GM12878 (cell line): ENCODE measurements at regions of chr6 and their contacts with region 1.

Region 1: DNA sequence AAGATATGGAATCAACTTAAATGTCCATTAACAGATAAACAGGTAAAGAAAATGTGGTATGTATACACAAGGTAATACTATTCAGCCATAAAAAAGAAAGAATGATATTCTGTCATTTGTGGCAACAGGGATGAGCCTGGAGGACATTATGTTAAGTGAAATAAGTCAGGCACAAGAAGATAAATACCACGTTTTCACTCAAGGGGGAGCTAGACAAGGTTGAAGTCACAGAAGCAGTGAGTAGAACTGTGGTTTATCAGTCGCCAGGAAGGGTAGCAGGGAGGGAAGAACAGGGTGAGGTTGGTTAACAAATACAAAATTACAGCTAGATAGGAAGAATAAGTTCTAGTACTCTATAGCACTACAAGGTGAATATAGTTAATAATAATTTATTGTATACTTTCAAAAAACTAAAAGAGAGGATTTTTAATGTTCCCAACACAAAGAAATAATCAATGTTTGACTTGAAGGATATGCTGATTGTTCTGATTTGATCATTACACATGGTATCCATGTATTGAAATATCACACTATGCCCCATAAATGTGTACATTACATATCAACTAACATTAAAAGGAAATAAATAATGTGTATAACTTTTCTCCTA is 21.1 kb downstream of the RTN4IP1 start:
- DNase-seq: peak; percentile 40
- ATAC-seq: peak; percentile 95
- H3K4me3 ChIP-seq: no peak overlapping the region
- H3K27ac ChIP-seq: no peak overlapping the region
- H3K4me1 ChIP-seq: no peaks in the 10 kb centered on the region; the same call in 1 of the 2 replicates
- H3K27me3 ChIP-seq: no peaks in the 10 kb centered on the region
- CTCF ChIP-seq: peak; percentile 68 to 72 (median 68)
- EP300 ChIP-seq: no peak
- POLR2A ChIP-seq: no peak
- RAD21 ChIP-seq: peak; percentile 76

Region 2: GRCh38 chr6:106620931-106621672 is 12.9 kb after region 1 on chr6:
- CTCF ChIA-PET with region 1: interaction called, 19 read pairs
- POLR2A ChIA-PET with region 1: no interaction called
- RAD21 ChIA-PET with region 1: interaction called, 8 read pairs
- SMC1A ChIA-PET with region 1: interaction called, 8 read pairs
- in situ Hi-C with region 1: no loop called
- intact Hi-C with region 1: no loop called
- DNase-seq: no peak
- ATAC-seq: no peak
- H3K4me3 ChIP-seq: no peak overlapping the region
- H3K27ac ChIP-seq: no peak overlapping the region
- H3K4me1 ChIP-seq: peaks cover 7% of the 10 kb centered on the region; the same call in 1 of the 2 replicates
- H3K27me3 ChIP-seq: no peaks in the 10 kb centered on the region
- CTCF ChIP-seq: no peak
- EP300 ChIP-seq: no peak
- POLR2A ChIP-seq: no peak
- RAD21 ChIP-seq: no peak

Region 3: GRCh38 chr6:106637717-106638341 is 29.7 kb after region 1 on chr6:
- CTCF ChIA-PET with region 1: interaction called, 19 read pairs
- POLR2A ChIA-PET with region 1: no interaction called
- RAD21 ChIA-PET with region 1: interaction called, 8 read pairs
- SMC1A ChIA-PET with region 1: interaction called, 18 read pairs
- in situ Hi-C with region 1: no loop called
- intact Hi-C with region 1: no loop called
- DNase-seq: no peak
- ATAC-seq: peak; percentile 87
- H3K4me3 ChIP-seq: peak overlapping the region; percentile 54
- H3K27ac ChIP-seq: peak overlapping the region; percentile 87
- H3K4me1 ChIP-seq: peaks cover 49% of the 10 kb centered on the region
- H3K27me3 ChIP-seq: no peaks in the 10 kb centered on the region
- CTCF ChIP-seq: no peak
- EP300 ChIP-seq: peak; percentile 33 to 73; a peak in 2 of 4 replicates
- POLR2A ChIP-seq: no peak
- RAD21 ChIP-seq: no peak

Region 4: GRCh38 chr6:106702451-106703110 is 94.4 kb after region 1 on chr6:
- CTCF ChIA-PET with region 1: interaction called, 13 read pairs
- POLR2A ChIA-PET with region 1: no interaction called
- RAD21 ChIA-PET with region 1: interaction called, 5 read pairs
- SMC1A ChIA-PET with region 1: interaction called, 5 read pairs
- in situ Hi-C with region 1: no loop called
- intact Hi-C with region 1: no loop called
- DNase-seq: peak; percentile 86
- ATAC-seq: peak; percentile 99
- H3K4me3 ChIP-seq: peak overlapping the region; percentile 23; the same call in 1 of the 2 replicates
- H3K27ac ChIP-seq: peak overlapping the region; percentile 93
- H3K4me1 ChIP-seq: peaks cover 17% of the 10 kb centered on the region
- H3K27me3 ChIP-seq: no peaks in the 10 kb centered on the region
- CTCF ChIP-seq: no peak
- EP300 ChIP-seq: peak in 1 of 2 experiments; percentile 77; a peak in 2 of 4 replicates
- POLR2A ChIP-seq: no peak
- RAD21 ChIP-seq: peak; percentile 9; the same call in 1 of the 2 replicates